ENCODE measurements at regions of chrX and their contacts with region 1.

Region 1: GRCh38 chrX:129781134-129781672 is 1.5 kb downstream of the SASH3 start:
- DNase-seq: peak; percentile 54 to 91 (median 73)
- ATAC-seq: peak; percentile 78
- H3K4me3 ChIP-seq: peak overlapping the region; percentile 76
- H3K4me3 Mint-ChIP-seq: peak overlapping the region; percentile 85
- H3K27ac ChIP-seq: peak overlapping the region; percentile 77 to 90
- H3K27ac Mint-ChIP-seq: peak overlapping the region; percentile 99
- H3K4me1 ChIP-seq: peaks cover 77% of the 10 kb centered on the region
- H3K4me1 Mint-ChIP-seq: peaks cover 78% of the 10 kb centered on the region
- H3K27me3 ChIP-seq: no peaks in the 10 kb centered on the region
- H3K27me3 Mint-ChIP-seq: no peaks in the 10 kb centered on the region
- CTCF ChIP-seq: no peak

Region 2: DNA sequence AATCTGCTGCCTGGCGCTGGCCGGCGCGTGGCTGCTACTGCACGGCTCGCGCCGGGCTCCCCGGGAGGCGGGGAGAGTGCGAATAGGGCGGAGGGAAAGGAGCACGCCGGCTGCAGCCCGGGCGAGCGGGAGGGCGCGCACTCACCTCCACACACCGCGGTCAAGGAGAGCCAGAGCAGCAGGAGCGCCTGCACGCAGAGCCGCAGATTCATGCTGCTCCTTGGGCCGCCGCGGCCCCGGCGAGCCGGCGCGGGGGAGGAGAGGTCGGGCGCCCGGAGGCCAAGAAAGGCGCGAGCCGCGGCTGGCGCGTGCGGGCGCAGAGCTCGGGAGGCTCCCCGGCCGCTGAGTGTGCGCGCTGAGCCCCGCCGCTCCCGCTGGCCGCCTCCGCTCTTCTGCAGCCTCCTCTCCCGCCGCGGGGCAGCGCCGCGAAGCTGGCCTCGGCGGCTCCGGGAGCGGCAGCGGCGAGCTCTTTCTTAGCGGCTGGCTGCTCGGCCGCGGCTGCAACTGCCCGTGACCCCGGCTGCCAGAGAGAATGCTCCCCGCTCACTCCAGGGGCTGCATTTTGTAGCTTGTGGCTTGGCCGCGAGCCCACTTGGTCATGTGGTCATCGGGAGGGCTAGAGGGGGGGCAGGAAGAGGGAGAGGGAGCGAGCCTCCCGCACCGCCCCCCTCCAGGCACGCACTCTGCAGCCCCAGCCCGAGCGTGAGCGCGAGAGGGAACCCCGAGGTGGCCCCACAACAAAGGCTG is 126.6 kb before region 1 on chrX and contains the start of gene APLN:
- CTCF ChIA-PET with region 1: no interaction called
- POLR2A ChIA-PET with region 1: interaction called, 10 read pairs
- intact Hi-C with region 1: no loop called
- DNase-seq: peak in 4 of 14 experiments; percentile 4 to 36 (median 30)
- ATAC-seq: peak; percentile 68
- H3K4me3 ChIP-seq: peak within 1 kb of the TSS; percentile 42
- H3K4me3 Mint-ChIP-seq: peak within 1 kb of the TSS; percentile 67
- H3K27ac ChIP-seq: no peak within 1 kb of the TSS
- H3K27ac Mint-ChIP-seq: no peak within 1 kb of the TSS
- H3K4me1 ChIP-seq: peaks cover 15% of the 10 kb centered on the region
- H3K4me1 Mint-ChIP-seq: peaks cover 9% of the 10 kb centered on the region
- H3K27me3 ChIP-seq: peaks cover 4 to 16% of the 10 kb centered on the region in 2 experiments
- H3K27me3 Mint-ChIP-seq: peaks cover 14% of the 10 kb centered on the region
- CTCF ChIP-seq: no peak
- total RNA-seq, gene APLN: not detected

Region 3: DNA sequence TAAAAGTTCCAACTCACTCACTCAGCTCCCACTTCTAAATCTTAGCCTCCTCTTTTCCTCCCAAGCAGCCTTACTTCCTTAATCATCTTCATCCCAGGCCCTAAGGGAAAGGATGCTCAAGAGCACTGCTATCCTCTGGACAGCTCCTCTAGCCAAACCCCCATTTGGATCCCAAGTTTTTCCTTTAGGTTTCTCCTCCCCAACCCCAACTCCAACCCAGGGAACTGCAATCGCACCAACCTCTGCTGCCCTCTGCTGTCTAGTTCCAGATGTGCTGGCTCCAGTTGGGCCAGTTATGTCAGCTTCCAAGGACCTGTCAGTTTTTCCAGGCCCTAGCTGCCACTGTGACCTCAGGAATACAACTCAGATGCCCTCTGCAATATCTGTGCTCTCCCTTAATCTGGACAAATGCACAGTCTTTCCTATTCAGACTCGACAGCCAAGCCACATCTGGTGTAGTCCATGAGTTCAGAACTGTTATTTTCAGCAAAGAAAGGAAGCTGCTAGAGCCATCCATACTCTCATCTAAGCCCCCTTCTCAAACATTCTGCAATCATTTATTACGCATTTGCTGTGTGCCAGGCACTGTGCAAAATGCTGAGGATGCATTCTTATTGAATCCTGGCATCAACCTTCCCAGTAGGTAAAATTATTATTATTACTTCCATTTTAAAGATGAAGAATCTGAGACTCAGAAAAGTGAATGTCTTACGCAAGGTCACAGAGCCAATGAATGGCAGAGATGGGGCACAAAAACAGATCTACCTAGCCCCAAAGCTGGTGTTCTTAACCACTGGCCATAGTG is 54.7 kb before region 1 on chrX:
- CTCF ChIA-PET with region 1: no interaction called
- POLR2A ChIA-PET with region 1: interaction called, 3 read pairs
- intact Hi-C with region 1: loop called (anchors 5 to 10 kb)
- DNase-seq: peak in 11 of 14 experiments; percentile 1 to 51 (median 23)
- ATAC-seq: no peak
- H3K4me3 ChIP-seq: no peak overlapping the region
- H3K4me3 Mint-ChIP-seq: no peak overlapping the region
- H3K27ac ChIP-seq: no peak overlapping the region
- H3K27ac Mint-ChIP-seq: no peak overlapping the region
- H3K4me1 ChIP-seq: peaks cover 21% of the 10 kb centered on the region
- H3K4me1 Mint-ChIP-seq: peaks cover 63% of the 10 kb centered on the region
- H3K27me3 ChIP-seq: no peaks in the 10 kb centered on the region
- H3K27me3 Mint-ChIP-seq: no peaks in the 10 kb centered on the region
- CTCF ChIP-seq: peak; percentile 20

Region 4: DNA sequence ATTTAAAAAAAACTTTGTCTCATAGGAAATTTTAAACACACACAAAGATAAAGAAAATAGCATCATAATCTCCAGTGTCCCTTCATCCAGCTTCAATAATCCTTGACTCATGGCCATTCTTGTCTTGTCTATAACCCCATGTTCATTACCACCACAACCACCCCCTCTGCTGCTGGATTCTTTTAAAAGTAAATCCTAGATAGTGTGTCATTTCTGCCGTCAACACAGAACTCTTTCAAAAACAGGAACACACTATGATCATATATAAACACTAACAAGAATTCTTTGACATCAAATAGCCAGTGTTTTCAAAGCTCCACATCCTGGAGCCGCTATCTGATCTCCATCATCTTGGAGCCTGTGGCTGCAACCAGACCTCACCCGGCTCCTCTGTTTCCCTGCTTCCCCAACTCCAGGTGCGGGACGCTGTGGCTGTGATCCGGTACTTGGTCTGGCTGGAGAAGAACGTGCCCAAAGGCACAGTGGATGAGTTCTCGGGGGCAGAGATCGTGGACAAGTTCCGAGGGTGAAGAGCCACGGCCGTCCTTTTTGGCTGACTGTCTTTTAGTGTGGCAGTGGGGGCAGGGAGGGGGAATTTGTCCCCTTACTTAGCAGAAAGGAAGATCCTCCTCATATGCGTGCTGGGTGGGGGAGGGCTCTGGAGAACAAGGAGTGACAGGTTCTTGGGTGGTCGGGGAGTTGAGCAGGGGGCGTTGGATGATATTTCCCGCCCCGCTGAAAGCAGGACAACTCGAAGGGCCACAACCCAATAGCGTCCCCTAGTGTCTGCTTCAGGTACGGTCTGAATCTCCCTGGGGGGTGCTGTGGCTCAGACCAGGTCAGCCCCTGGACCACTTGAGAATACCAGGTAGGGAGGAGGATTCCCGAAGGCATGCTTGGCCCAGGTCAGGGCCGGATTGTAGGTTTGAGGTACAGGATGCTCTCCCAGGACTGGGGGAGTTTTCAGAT is 26.9 kb before region 1 on chrX:
- CTCF ChIA-PET with region 1: interaction called, 10 read pairs
- POLR2A ChIA-PET with region 1: interaction called, 72 read pairs
- intact Hi-C with region 1: loop called in 1 of 2 experiments (anchors 2 kb)
- DNase-seq: no peak
- ATAC-seq: no peak
- H3K4me3 ChIP-seq: no peak overlapping the region
- H3K4me3 Mint-ChIP-seq: peak overlapping the region; percentile 12
- H3K27ac ChIP-seq: no peak overlapping the region
- H3K27ac Mint-ChIP-seq: peak overlapping the region; percentile 76
- H3K4me1 ChIP-seq: peaks cover 52% of the 10 kb centered on the region
- H3K4me1 Mint-ChIP-seq: peaks cover 56% of the 10 kb centered on the region
- H3K27me3 ChIP-seq: no peaks in the 10 kb centered on the region
- H3K27me3 Mint-ChIP-seq: no peaks in the 10 kb centered on the region
- CTCF ChIP-seq: no peak

Region 5: DNA sequence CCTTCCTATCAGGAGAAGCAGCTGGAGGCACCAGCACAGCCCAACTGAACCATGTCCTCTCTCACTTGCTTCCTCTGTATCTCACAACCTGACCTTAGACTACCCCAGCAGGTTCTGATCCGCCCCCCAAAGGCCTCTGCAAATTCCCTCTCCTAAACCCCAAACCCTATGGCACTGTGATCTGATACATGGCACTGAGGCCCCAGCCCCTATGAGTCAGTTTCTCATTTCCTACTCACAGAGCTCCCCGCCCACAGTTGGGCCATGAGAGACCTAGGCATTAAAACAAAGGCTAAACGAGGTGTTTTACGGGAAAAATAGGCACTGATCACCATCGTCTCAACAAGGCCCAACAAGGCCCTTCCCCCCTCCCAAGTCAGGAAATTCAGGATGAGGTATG is 17.7 kb after region 1 on chrX:
- CTCF ChIA-PET with region 1: no interaction called
- POLR2A ChIA-PET with region 1: interaction called, 19 read pairs
- intact Hi-C with region 1: no loop called
- DNase-seq: peak in 1 of 14 experiments; percentile 36
- ATAC-seq: no peak
- H3K4me3 ChIP-seq: no peak overlapping the region
- H3K4me3 Mint-ChIP-seq: no peak overlapping the region
- H3K27ac ChIP-seq: peak overlapping the region in 1 of 2 donors; percentile 10
- H3K27ac Mint-ChIP-seq: peak overlapping the region; percentile 71
- H3K4me1 ChIP-seq: peaks cover 3% of the 10 kb centered on the region
- H3K4me1 Mint-ChIP-seq: peaks cover 14% of the 10 kb centered on the region
- H3K27me3 ChIP-seq: no peaks in the 10 kb centered on the region
- H3K27me3 Mint-ChIP-seq: no peaks in the 10 kb centered on the region
- CTCF ChIP-seq: no peak